ENCODE measurements at regions of chr7 and their contacts with region 1.

Region 1: DNA sequence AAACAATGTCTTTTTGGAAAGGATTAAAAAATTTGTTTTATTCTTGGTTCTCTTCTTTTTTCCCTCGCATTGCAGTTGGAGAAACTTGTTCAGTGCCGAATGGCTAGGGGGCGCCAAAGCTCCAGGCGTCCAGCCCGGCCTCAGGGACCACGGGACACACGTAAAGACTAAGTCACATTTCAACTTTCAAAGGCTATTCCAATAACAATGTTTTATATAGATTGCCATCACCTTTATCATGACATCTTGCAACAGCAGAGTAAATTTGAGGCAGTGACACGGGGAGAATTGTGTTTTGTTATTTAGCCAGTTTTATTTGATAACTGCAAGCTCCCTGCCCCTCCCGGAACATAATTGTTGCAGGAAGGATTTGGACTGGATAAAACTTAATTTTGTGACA is 2.2 kb upstream of the IGFBP3 start:
- DNase-seq: peak; percentile 39 to 76
- H3K4me3 ChIP-seq: no peak overlapping the region
- H3K4me1 ChIP-seq: no peaks in the 10 kb centered on the region
- H3K27me3 ChIP-seq: peaks cover 40% of the 10 kb centered on the region

Region 2: GRCh38 chr7:45080265-45080962 is 842.9 kb before region 1 on chr7:
- in situ Hi-C with region 1: no loop called
- DNase-seq: no peak
- H3K4me3 ChIP-seq: no peak overlapping the region
- H3K4me1 ChIP-seq: no peaks in the 10 kb centered on the region
- H3K27me3 ChIP-seq: no peaks in the 10 kb centered on the region

Region 3: DNA sequence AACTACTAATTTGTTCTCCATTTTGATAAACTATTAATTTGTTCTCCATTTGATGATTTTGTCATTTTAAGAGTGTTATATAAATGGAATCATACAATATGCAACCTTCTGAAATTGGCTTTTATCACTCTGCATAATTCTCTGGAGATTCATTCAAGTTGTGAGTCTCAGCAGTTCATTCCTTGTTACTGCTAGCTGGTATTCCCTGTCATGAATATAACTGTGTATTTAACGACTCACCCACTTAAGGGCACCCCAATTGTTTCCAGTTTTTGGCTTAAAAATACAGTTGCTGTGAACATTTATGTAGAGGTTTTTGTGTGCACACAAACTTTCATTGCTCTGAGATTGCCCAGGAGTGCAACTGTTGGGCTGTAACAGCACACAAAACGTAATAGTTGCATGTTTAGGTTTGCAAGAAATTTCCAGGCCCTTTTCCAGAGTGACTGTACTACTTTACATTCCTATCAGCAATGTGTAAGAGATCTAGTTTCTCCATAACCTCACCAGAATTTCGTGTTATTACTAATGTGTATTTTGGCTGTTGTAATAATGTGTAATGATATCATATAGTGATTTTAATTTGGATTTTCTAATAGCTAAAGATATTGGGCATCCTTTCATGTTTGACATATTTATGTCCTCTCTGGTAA is 502.3 kb before region 1 on chr7:
- in situ Hi-C with region 1: no loop called
- DNase-seq: no peak
- H3K4me3 ChIP-seq: no peak overlapping the region
- H3K4me1 ChIP-seq: no peaks in the 10 kb centered on the region
- H3K27me3 ChIP-seq: peaks cover 3% of the 10 kb centered on the region; the same call in 1 of the 2 replicates

Region 4: DNA sequence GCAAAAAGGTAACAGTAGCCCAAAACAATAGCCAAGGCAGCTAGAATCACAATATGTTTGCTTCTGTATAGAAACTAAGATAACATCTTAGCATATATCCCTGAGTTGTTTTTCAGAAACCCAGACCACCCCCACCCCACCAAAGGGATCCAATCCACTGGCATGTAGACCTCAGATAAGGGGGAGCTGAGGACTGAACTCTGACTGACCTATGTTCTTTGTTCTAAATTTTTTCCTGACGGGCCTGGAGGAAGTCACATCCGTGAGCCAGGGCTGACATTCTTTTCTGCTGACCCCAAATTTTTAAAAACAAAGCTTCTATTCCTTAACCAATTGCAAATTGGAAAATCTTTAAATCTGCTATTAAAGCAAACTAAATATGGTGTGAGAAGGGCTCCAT is 491.7 kb after region 1 on chr7:
- in situ Hi-C with region 1: no loop called
- DNase-seq: no peak
- H3K4me3 ChIP-seq: no peak overlapping the region
- H3K4me1 ChIP-seq: no peaks in the 10 kb centered on the region
- H3K27me3 ChIP-seq: no peaks in the 10 kb centered on the region

Region 5: GRCh38 chr7:47088329-47089067 is 1165.2 kb after region 1 on chr7:
- in situ Hi-C with region 1: loop called (anchors 5 kb)
- DNase-seq: peak; percentile 41 to 68
- H3K4me3 ChIP-seq: no peak overlapping the region
- H3K4me1 ChIP-seq: no peaks in the 10 kb centered on the region
- H3K27me3 ChIP-seq: no peaks in the 10 kb centered on the region